ENCODE measurements at regions of chr19 and their contacts with region 1.

Region 1: DNA sequence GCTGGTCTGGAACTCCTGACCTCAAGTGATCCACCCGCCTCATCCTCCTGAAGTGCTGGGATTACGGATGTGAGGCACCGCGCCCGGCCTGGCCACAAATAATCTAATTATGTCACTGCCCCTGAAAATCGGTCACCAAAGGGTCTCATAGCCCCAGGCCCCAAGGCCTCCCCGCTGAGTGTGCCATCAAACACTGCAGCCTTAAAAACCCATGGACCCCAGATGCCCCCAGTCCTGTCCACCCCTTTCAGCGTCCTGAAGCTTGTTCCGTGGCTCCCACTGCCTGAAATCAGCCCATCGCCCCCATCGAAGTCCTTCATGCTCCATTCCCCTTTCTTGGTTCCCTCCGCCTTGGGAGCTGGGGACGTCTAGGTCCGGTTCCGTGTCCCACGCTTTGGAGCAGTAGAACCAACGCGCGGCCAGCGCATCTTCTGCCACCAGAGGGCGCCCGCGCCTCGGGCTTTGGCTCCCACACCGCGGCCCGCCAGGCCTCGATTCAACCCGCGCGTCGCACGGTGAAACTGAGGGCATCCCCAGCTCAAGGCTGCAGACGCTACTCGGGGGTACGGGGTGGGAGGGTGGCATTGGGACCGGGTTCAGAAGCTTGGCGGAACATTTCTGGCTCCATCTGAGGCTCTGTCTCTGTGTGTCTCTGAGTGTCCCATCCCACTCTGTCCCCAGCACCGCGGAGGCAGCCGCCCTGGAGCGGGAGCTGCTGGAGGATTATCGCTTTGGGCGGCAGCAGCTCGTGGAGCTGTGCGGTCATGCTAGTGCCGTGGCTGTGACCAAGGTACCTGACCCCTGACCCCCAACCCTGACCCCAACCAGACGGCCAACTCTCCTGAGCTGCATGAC is 3.5 kb downstream of the YJEFN3 start:
- DNase-seq: peak; percentile 89
- H3K4me3 Mint-ChIP-seq: no peak overlapping the region
- H3K27ac Mint-ChIP-seq: no peak overlapping the region
- H3K4me1 Mint-ChIP-seq: peaks cover 11% of the 10 kb centered on the region
- H3K27me3 Mint-ChIP-seq: no peaks in the 10 kb centered on the region

Region 2: GRCh38 chr19:19515764-19516519 is 16.2 kb before region 1 on chr19 and contains the start of gene NDUFA13:
- CTCF ChIA-PET with region 1: interaction called, 20 read pairs
- POLR2A ChIA-PET with region 1: interaction called, 8 read pairs
- intact Hi-C with region 1: no loop called
- DNase-seq: peak; percentile 97
- H3K4me3 Mint-ChIP-seq: peak within 1 kb of the TSS; percentile 94
- H3K27ac Mint-ChIP-seq: peak within 1 kb of the TSS; percentile 94
- H3K4me1 Mint-ChIP-seq: peaks cover 28% of the 10 kb centered on the region
- H3K27me3 Mint-ChIP-seq: no peaks in the 10 kb centered on the region
- total RNA-seq, gene NDUFA13: 365 to 374 TPM

Region 3: GRCh38 chr19:19643158-19644053 is 111.2 kb after region 1 on chr19 and contains the start of gene GMIP:
- CTCF ChIA-PET with region 1: interaction called, 65 read pairs
- POLR2A ChIA-PET with region 1: interaction called, 8 read pairs
- intact Hi-C with region 1: loop called (anchors 1 kb)
- DNase-seq: peak; percentile 89
- H3K4me3 Mint-ChIP-seq: peak within 1 kb of the TSS; percentile 99
- H3K27ac Mint-ChIP-seq: peak within 1 kb of the TSS; percentile 98
- H3K4me1 Mint-ChIP-seq: peaks cover 12% of the 10 kb centered on the region
- H3K27me3 Mint-ChIP-seq: no peaks in the 10 kb centered on the region
- total RNA-seq, gene GMIP: 78.6 to 79.4 TPM

Region 4: GRCh38 chr19:19652456-19653295 is 120.5 kb after region 1 on chr19:
- CTCF ChIA-PET with region 1: interaction called, 15 read pairs
- POLR2A ChIA-PET with region 1: no interaction called
- intact Hi-C with region 1: no loop called
- DNase-seq: no peak
- H3K4me3 Mint-ChIP-seq: no peak overlapping the region
- H3K27ac Mint-ChIP-seq: no peak overlapping the region
- H3K4me1 Mint-ChIP-seq: no peaks in the 10 kb centered on the region
- H3K27me3 Mint-ChIP-seq: no peaks in the 10 kb centered on the region

Region 5: DNA sequence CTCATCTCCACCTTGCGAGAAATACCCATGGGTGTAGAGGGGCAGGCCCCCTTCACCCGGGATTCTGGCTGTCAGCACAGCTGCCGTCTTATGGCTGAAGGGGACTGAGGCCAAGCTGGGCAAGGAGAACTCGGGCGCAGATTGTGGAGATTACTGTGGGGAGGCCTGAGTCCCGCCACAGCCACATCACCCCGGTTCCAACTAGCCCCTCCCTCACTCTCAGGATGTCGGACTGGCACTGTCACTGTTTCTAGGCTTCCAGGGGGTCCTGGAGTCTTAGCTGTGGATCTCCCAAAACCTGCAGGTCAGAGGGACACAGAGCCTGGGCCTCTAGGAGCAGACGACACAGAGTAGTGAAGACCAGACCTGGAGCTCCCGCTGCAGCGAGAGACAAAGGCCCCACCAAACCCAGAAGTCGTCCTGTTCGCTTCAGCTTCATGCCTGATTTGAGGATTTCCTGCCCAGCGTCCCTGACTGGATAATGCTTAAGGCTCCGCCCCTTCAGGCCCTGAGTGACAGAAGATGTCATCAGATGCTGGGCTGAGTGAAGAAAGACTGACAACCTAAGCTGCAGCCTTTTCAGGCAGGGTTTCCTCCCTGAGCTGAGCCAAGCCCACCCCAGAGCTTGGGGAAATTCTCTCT is 424.4 kb after region 1 on chr19:
- CTCF ChIA-PET with region 1: interaction called, 10 read pairs
- POLR2A ChIA-PET with region 1: no interaction called
- intact Hi-C with region 1: loop called (anchors 1 kb)
- DNase-seq: no peak
- H3K4me3 Mint-ChIP-seq: no peak overlapping the region
- H3K27ac Mint-ChIP-seq: no peak overlapping the region
- H3K4me1 Mint-ChIP-seq: peaks cover 5% of the 10 kb centered on the region
- H3K27me3 Mint-ChIP-seq: no peaks in the 10 kb centered on the region

Region 6: DNA sequence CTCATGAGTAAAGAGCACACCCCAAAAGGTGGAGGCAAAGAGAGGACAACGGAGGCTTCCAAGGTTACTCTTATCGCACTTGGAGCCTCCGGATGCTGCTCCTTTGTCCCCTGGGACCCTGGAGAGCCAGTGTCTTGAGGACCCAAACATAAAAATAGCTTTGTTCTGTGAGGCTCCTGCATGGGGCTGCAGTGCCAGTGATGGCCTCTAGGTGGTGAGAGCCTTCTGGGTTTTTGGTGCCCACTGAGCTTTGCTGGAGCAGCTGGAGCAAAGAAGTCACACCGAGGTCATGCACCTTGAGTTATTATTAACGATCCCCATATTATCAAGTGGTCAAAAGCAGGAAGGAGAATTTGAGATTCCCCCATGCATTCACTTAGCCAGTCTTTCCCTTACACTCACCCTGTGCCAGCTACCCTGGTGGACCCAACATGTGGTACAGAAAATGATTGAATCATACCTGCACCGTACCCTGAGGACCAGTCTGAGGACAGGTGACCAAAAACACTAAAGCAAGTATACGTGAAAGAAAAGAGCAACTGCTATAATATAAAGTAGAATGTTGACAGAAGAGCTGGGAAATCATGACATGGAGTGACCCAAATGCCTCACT is 465.6 kb after region 1 on chr19:
- CTCF ChIA-PET with region 1: no interaction called
- POLR2A ChIA-PET with region 1: no interaction called
- intact Hi-C with region 1: no loop called
- DNase-seq: peak; percentile 66
- H3K4me3 Mint-ChIP-seq: no peak overlapping the region
- H3K27ac Mint-ChIP-seq: no peak overlapping the region
- H3K4me1 Mint-ChIP-seq: no peaks in the 10 kb centered on the region
- H3K27me3 Mint-ChIP-seq: no peaks in the 10 kb centered on the region